Sigmoid colon (tissue), 7 donors: ENCODE measurements at regions of chr1 and their contacts with region 1.

Region 1: GRCh38 chr1:153670859-153671627 is at the start of gene ILF2:
- DNase-seq: peak; percentile 99
- H3K4me3 ChIP-seq: peak within 1 kb of the TSS; percentile 66 to 81 (median 77)
- H3K27ac ChIP-seq: peak within 1 kb of the TSS; percentile 86 to 90 (median 89)
- H3K4me1 ChIP-seq: peaks cover 0 to 20% (median 15%) of the 10 kb centered on the region in 4 donors
- H3K27me3 ChIP-seq: no peaks in the 10 kb centered on the region
- CTCF ChIP-seq: no peak
- EP300 ChIP-seq: no peak
- POLR2A ChIP-seq: peak; percentile 92 to 96
- total RNA-seq, gene ILF2: 59.8 to 94.0 (median 79.7) TPM

Region 2: GRCh38 chr1:153649863-153650235 is 21.2 kb before region 1 on chr1:
- intact Hi-C with region 1: no loop called
- DNase-seq: no peak
- H3K4me3 ChIP-seq: no peak overlapping the region
- H3K27ac ChIP-seq: no peak overlapping the region
- H3K4me1 ChIP-seq: no peaks in the 10 kb centered on the region
- H3K27me3 ChIP-seq: no peaks in the 10 kb centered on the region
- CTCF ChIP-seq: no peak
- EP300 ChIP-seq: no peak
- POLR2A ChIP-seq: no peak

Region 3: DNA sequence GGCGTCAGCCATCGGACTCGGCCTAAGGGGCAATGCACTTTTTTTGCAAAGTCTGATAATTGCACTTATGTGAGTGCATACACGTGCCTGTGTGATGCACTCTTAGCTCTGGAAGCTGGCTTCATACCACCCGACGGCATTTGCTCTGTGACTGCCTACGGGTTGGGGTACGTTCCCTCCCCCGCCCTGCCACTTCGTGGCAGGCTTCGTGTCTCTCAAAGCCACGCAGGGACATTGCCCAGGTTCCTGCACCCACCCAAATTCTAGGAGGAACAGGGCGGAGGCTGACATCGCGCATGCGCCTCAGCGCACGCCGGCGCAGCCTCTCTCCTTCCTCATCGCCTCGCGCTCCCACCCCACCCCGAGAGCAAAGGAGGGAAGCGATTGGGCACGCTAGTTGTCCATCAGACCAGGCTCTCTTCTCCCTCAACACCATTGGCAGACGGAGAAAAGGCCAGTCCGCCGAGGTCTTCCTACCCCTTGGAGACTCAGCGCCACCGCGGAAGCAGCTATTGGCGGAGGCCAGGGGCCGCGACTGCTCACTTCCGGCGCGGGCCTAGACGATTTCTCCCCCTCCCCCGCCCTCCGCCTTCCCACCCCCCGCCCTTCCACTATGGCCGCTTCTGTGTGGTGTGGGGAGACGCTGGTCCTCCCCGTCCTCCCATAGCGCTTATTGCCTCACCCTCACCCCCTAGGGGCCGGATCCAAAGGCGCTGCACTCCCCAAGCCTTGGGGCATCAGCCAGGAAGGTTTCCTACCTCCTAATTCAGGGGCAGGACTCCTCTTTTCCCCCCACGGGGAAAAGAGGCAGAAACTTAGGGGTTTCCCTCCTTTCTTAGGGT is 56.6 kb after region 1 on chr1 and contains the start of gene INTS3:
- intact Hi-C with region 1: loop called (anchors 2 kb)
- DNase-seq: peak; percentile 100
- H3K4me3 ChIP-seq: peak within 1 kb of the TSS; percentile 70 to 93 (median 86)
- H3K27ac ChIP-seq: peak within 1 kb of the TSS; percentile 94 to 100 (median 98)
- H3K4me1 ChIP-seq: peaks cover 0 to 28% (median 21%) of the 10 kb centered on the region in 4 donors
- H3K27me3 ChIP-seq: no peaks in the 10 kb centered on the region
- CTCF ChIP-seq: no peak
- EP300 ChIP-seq: no peak
- POLR2A ChIP-seq: peak; percentile 63 to 66
- total RNA-seq, gene INTS3: 31.4 to 53.7 (median 37.3) TPM